Esophagus muscularis mucosa (tissue), 4 donors: ENCODE measurements at regions of chr6 and their contacts with region 1.

Region 1: GRCh38 chr6:52020945-52021570 is 66.4 kb downstream of the PKHD1 start:
- DNase-seq: no peak
- H3K4me3 ChIP-seq: no peak overlapping the region
- H3K27ac ChIP-seq: no peak overlapping the region
- H3K4me1 ChIP-seq: no peaks in the 10 kb centered on the region
- H3K27me3 ChIP-seq: peaks cover 0 to 18% (median 0%) of the 10 kb centered on the region in 4 donors
- CTCF ChIP-seq: peak; percentile 72 to 80 (median 77)
- EP300 ChIP-seq: no peak
- POLR2A ChIP-seq: no peak

Region 2: DNA sequence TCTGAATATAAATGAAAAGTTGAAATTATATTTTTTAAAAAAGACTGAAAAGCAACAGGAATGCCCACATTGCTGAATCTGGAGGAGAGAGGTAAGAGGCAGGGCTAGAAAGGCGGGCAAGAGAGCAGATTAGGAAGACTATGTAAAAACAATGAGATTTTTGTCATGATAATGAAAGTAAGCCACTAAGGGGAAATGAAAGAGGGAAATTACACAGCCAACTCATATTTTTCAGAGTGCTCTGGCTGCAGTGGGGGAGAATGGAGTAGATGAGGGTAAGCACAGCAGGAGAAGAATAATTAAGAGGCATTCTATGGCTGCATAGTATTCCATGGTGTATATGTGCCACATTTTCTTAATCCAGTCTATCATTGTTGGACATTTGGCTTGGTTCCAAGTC is 215.5 kb before region 1 on chr6:
- intact Hi-C with region 1: no loop called
- DNase-seq: no peak
- H3K4me3 ChIP-seq: no peak overlapping the region
- H3K27ac ChIP-seq: no peak overlapping the region
- H3K4me1 ChIP-seq: peaks cover 0 to 3% (median 3%) of the 10 kb centered on the region in 4 donors
- H3K27me3 ChIP-seq: no peaks in the 10 kb centered on the region
- CTCF ChIP-seq: no peak
- EP300 ChIP-seq: no peak
- POLR2A ChIP-seq: no peak

Region 3: GRCh38 chr6:51855310-51856082 is 165.6 kb before region 1 on chr6:
- intact Hi-C with region 1: loop called (anchors 10 kb)
- DNase-seq: no peak
- H3K4me3 ChIP-seq: no peak overlapping the region
- H3K27ac ChIP-seq: no peak overlapping the region
- H3K4me1 ChIP-seq: peaks cover 0 to 3% (median 0%) of the 10 kb centered on the region in 4 donors
- H3K27me3 ChIP-seq: no peaks in the 10 kb centered on the region
- CTCF ChIP-seq: peak; percentile 52 to 70 (median 62)
- EP300 ChIP-seq: no peak
- POLR2A ChIP-seq: no peak

Region 4: DNA sequence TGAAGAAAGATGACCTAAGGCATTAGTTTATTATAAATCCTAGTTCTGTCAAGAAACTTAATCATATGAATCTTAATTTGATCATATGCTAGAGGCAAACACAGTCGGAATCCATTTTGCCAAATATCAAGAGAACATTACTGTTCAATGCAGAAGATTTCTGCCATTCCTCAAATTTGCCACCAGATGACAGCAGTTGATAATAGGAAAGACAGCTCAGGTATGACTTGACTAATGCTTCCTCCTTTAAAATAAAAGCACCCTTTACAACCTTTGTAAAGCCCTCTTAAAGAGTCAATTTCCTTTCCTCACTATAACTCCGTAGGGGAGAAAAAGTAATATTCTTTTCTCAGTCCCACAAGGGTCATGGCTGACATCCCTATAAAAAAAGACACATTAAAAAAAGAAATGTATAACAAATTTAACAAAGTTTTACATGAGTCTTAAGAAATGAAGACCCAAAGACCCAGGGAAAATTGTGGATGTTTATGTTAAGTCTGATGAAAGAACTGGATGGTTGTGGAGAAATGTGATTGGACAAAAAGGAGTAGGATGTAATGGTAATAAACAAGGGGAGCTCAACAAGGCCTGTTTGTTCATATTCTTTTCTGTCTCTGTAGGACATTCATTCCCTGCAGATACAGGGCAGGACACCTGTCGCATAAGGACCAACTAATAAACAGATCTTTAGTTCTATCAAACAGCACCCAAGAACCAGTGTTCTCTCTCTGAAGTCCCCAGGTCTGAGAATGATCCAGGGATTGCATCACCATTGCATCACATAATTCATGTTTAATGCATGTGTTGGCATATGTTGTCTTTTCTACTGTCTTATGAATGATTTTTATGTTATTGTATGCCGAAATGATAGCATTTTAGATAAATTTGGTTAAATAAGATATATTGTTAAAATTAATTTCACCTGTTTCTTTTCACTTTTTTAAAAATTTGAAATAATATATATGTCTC is 142.2 kb after region 1 on chr6:
- intact Hi-C with region 1: no loop called
- DNase-seq: no peak
- H3K4me3 ChIP-seq: no peak overlapping the region
- H3K27ac ChIP-seq: no peak overlapping the region
- H3K4me1 ChIP-seq: no peaks in the 10 kb centered on the region
- H3K27me3 ChIP-seq: peaks cover 0 to 4% (median 0%) of the 10 kb centered on the region in 4 donors
- CTCF ChIP-seq: peak; percentile 18 to 42 (median 30)
- EP300 ChIP-seq: no peak
- POLR2A ChIP-seq: no peak